T-cell (primary cell): ENCODE measurements at regions of chr1 and their contacts with region 1.

Region 1: GRCh38 chr1:239912471-239912870 is 179.2 kb upstream of the FMN2 start:
- DNase-seq: no peak
- ATAC-seq: no peak
- H3K4me3 ChIP-seq: no peak overlapping the region
- H3K4me3 Mint-ChIP-seq: no peak overlapping the region
- H3K27ac ChIP-seq: no peak overlapping the region
- H3K27ac Mint-ChIP-seq: no peak overlapping the region
- H3K4me1 ChIP-seq: no peaks in the 10 kb centered on the region
- H3K4me1 Mint-ChIP-seq: no peaks in the 10 kb centered on the region
- H3K27me3 ChIP-seq: no peaks in the 10 kb centered on the region
- H3K27me3 Mint-ChIP-seq: peaks cover 3 to 5% of the 10 kb centered on the region in 2 donors

Region 2: GRCh38 chr1:239184561-239185244 is 727.8 kb before region 1 on chr1:
- CTCF ChIA-PET with region 1: no interaction called
- POLR2A ChIA-PET with region 1: interaction called in 1 of 2 experiments, 10 read pairs
- DNase-seq: no peak
- ATAC-seq: no peak
- H3K4me3 ChIP-seq: no peak overlapping the region
- H3K4me3 Mint-ChIP-seq: no peak overlapping the region
- H3K27ac ChIP-seq: no peak overlapping the region
- H3K27ac Mint-ChIP-seq: no peak overlapping the region
- H3K4me1 ChIP-seq: no peaks in the 10 kb centered on the region
- H3K4me1 Mint-ChIP-seq: no peaks in the 10 kb centered on the region
- H3K27me3 ChIP-seq: no peaks in the 10 kb centered on the region
- H3K27me3 Mint-ChIP-seq: no peaks in the 10 kb centered on the region